ENCODE measurements at regions of chr9 and their contacts with region 1.

Region 1: GRCh38 chr9:124771021-124771866 is at the start of gene NR6A1:
- DNase-seq: peak; percentile 94
- H3K4me3 Mint-ChIP-seq: peak within 1 kb of the TSS; percentile 79
- H3K27ac Mint-ChIP-seq: peak within 1 kb of the TSS; percentile 77
- H3K4me1 Mint-ChIP-seq: peaks cover 43% of the 10 kb centered on the region
- H3K27me3 Mint-ChIP-seq: peaks cover 64% of the 10 kb centered on the region
- total RNA-seq, gene NR6A1: 0.61 to 0.83 TPM

Region 2: DNA sequence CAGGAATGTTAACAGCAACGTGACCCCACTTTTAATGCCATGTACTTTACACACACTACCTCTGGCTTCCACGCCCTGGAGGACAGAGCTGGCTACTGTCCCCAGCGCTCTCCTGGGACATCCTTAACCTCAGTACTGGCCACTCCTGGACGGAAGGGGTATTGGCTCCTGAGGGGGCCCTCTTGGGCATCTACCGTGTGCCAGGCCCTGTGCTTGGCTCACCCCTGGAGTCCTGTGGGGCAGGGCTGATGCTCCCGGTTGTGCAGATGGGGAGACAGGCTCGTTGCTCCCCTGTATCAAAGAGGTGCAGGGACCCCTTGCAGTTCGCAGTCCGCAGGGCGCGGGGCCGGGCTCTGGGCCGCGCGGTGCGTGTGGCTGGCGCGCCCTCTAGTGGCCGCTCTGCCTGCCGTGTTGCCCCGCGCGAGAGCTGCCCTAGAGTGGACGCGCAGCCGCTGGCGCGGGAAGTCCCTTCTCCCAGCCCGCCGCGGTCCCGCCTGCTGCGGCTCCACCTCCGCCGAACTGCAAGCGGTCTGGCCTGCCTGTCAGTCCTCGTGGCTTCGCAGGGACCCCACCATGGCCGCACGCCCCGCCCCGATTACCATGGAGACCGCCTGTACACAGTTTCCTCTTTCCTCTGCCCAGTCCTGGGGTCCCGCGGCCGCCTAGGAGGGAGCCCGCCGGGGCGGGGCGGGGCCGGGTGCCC is 81.7 kb after region 1 on chr9 and contains the start of gene WDR38:
- CTCF ChIA-PET with region 1: interaction called, 530 read pairs
- POLR2A ChIA-PET with region 1: interaction called, 18 read pairs
- intact Hi-C with region 1: loop called (anchors 1 kb)
- DNase-seq: peak; percentile 84
- H3K4me3 Mint-ChIP-seq: peak within 1 kb of the TSS; percentile 70
- H3K27ac Mint-ChIP-seq: no peak within 1 kb of the TSS
- H3K4me1 Mint-ChIP-seq: peaks cover 16% of the 10 kb centered on the region
- H3K27me3 Mint-ChIP-seq: peaks cover 4% of the 10 kb centered on the region
- total RNA-seq, gene WDR38: not detected

Region 3: DNA sequence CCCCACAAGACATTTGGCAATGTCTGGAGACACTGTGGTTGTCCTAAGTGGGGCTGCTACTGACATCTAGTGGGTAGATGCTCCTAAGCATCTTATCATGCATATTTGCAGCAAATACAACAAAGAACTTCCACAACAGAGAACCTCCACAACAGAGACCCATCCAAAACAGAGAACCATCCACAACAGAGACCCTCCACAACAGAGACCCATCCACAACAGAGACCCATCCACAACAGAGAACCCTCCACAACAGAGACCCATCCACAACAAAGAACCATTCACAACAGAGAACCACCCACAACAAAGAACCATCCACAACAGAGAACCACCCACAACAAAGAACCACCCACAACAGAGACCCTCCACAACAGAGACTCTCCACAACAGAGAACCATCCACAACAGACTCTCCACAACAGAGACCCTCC is 123.5 kb after region 1 on chr9:
- CTCF ChIA-PET with region 1: interaction called, 13 read pairs
- POLR2A ChIA-PET with region 1: no interaction called
- intact Hi-C with region 1: loop called (anchors 1 kb)
- DNase-seq: peak; percentile 29
- H3K4me3 Mint-ChIP-seq: no peak overlapping the region
- H3K27ac Mint-ChIP-seq: no peak overlapping the region
- H3K4me1 Mint-ChIP-seq: peaks cover 11% of the 10 kb centered on the region
- H3K27me3 Mint-ChIP-seq: no peaks in the 10 kb centered on the region

Region 4: DNA sequence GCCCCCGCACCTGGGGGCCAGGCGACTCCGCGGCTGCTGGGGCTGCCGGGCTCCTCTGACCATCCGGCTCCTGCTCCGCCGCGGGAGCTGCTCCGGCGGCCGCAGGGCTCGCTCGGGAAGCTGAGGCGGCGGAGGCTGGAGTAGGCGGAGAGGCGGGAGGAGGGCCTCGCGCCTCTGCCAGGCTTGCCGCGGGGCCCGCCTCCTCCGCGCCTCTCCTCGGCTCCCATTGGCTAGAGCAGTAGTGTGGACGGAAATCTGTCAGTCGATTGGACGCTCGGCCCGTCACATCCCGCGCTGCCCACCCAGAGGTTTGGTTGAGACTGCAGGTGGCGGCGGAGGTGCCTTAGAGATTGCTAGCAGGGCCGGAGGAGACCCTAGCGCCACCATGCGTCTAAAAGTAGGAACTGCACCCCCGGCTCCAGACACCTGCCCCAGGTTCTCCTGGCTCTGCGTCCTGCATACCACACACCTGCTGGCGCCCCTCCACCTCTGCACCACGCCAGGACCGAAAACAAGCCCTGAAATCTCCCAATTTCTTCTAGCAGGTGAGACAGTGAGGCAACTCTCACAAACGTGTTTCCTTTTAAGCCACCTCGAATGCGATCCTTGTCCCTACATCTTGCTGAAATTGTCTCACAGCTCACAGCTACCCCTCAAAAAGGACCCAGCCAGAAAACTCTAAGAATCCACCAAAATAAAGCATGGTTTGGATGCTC is 372.3 kb after region 1 on chr9 and contains the start of gene SCAI:
- CTCF ChIA-PET with region 1: interaction called, 7 read pairs
- POLR2A ChIA-PET with region 1: no interaction called
- intact Hi-C with region 1: loop called (anchors 1 kb)
- DNase-seq: peak; percentile 99
- H3K4me3 Mint-ChIP-seq: peak within 1 kb of the TSS; percentile 82
- H3K27ac Mint-ChIP-seq: peak within 1 kb of the TSS; percentile 24
- H3K4me1 Mint-ChIP-seq: peaks cover 31% of the 10 kb centered on the region
- H3K27me3 Mint-ChIP-seq: no peaks in the 10 kb centered on the region
- total RNA-seq, gene SCAI: 9.0 to 10.8 TPM

Region 5: GRCh38 chr9:125241000-125241862 is 470.0 kb after region 1 on chr9 and contains the start of gene HSPA5:
- CTCF ChIA-PET with region 1: no interaction called
- POLR2A ChIA-PET with region 1: no interaction called
- intact Hi-C with region 1: loop called (anchors 5 kb)
- DNase-seq: peak; percentile 100
- H3K4me3 Mint-ChIP-seq: peak within 1 kb of the TSS; percentile 94
- H3K27ac Mint-ChIP-seq: peak within 1 kb of the TSS; percentile 98
- H3K4me1 Mint-ChIP-seq: peaks cover 46% of the 10 kb centered on the region
- H3K27me3 Mint-ChIP-seq: peaks cover 2% of the 10 kb centered on the region
- total RNA-seq, gene HSPA5: 169 to 170 TPM

Measured in activated CD4-positive, alpha-beta memory T cell treated with anti-CD3 and anti-CD28 coated beads for 36 hours (primary cell).